Mammary epithelial cell (primary cell): ENCODE measurements at regions of chr7 and their contacts with region 1.

Region 1: DNA sequence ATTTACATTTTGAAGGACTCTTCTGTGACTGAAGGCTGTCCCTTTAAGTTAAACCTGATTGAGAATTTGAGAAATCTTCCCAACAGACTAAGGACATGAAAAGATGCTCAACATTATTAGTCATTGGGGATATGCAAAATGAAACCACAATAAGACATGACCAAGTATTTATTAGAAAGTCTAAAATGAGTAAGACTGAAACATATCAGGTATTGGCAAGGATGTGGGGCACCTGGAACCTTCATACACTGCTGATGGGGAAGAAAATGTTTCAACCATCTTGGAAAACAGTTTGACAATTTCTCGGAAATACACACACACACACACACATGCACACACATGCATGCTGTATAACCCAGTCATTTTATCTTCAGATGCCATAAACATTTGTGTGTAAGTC is 132.1 kb upstream of the CDK6 start:
- DNase-seq: peak; percentile 76
- H3K4me3 ChIP-seq: no peak overlapping the region
- H3K27ac ChIP-seq: no peak overlapping the region
- H3K4me1 ChIP-seq: peaks cover 9% of the 10 kb centered on the region
- H3K27me3 ChIP-seq: no peaks in the 10 kb centered on the region
- CTCF ChIP-seq: no peak

Region 2: GRCh38 chr7:92916674-92917224 is 51.8 kb before region 1 on chr7:
- CTCF ChIA-PET with region 1: no interaction called
- dilution Hi-C with region 1: no loop called
- in situ Hi-C with region 1: no loop called
- intact Hi-C with region 1: loop called (anchors 1 kb)
- DNase-seq: peak; percentile 78
- H3K4me3 ChIP-seq: no peak overlapping the region
- H3K27ac ChIP-seq: peak overlapping the region; percentile 92
- H3K4me1 ChIP-seq: peaks cover 13% of the 10 kb centered on the region
- H3K27me3 ChIP-seq: no peaks in the 10 kb centered on the region
- CTCF ChIP-seq: no peak

Region 3: DNA sequence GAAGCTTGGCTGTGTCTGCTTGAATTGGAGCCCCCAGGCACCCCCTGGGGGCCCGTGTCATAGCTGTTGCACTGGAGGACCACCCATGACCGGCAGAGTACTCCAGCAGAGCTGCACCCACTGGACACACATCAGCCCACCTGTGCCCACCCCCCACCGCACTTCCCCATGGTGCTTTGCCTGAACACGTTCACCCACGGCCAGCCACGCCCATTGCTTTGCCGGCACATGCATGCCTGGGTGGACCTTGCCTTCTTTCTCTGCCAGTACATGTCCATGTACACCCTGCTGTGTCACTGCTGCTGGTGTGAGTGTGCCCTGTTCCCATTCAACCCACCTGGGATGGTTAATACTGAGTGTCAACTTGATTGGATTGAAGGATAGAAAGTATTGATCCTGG is 60.6 kb after region 1 on chr7:
- CTCF ChIA-PET with region 1: no interaction called
- dilution Hi-C with region 1: no loop called
- in situ Hi-C with region 1: no loop called
- intact Hi-C with region 1: no loop called
- DNase-seq: peak; percentile 66
- H3K4me3 ChIP-seq: no peak overlapping the region
- H3K27ac ChIP-seq: no peak overlapping the region
- H3K4me1 ChIP-seq: peaks cover 16% of the 10 kb centered on the region
- H3K27me3 ChIP-seq: no peaks in the 10 kb centered on the region
- CTCF ChIP-seq: no peak